Activated naive CD4-positive, alpha-beta T cell treated with anti-CD3 and anti-CD28 coated beads for 36 hours (primary cell): ENCODE measurements at regions of chr4 and their contacts with region 1.

Region 1: DNA sequence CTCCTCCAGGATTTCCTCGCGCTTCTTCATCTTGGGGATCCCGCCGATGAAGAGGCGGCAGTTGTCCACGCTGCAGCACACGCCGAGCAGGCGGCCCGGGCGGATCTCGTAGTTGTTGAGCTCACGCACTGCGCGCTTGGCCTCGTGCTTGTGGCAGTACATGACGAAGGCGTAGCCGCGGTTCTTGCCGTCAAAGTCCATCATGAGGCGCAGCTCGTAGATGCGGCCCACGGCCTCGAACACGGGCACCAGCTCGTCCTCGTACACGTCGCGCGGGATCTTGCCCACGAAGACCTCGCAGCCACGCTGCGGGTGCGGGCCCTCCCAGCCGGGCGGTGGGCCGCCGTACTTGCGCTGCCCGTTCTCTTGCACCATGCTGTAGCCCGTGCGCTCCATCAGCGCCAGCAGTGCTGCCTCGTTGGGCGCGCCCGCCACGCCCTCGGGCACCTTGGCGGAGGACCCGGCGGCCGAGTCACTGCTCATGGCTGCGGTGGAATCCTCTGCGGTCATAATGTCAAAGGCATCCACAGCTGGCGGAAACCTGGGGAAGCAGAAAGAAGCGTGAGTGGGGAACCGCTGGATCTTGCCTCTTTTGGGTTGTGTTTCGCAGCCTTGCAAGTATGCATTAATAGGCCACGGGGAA is 103.4 kb downstream of the CHRNA9 start:
- DNase-seq: no peak
- H3K4me3 Mint-ChIP-seq: no peak overlapping the region
- H3K27ac Mint-ChIP-seq: no peak overlapping the region
- H3K4me1 Mint-ChIP-seq: peaks cover 36% of the 10 kb centered on the region
- H3K27me3 Mint-ChIP-seq: no peaks in the 10 kb centered on the region

Region 2: GRCh38 chr4:40462326-40462725 is 23.8 kb after region 1 on chr4:
- CTCF ChIA-PET with region 1: interaction called, 4 read pairs
- intact Hi-C with region 1: loop called (anchors 1 kb)
- DNase-seq: peak; percentile 67
- H3K4me3 Mint-ChIP-seq: no peak overlapping the region
- H3K27ac Mint-ChIP-seq: peak overlapping the region; percentile 22
- H3K4me1 Mint-ChIP-seq: peaks cover 17% of the 10 kb centered on the region
- H3K27me3 Mint-ChIP-seq: no peaks in the 10 kb centered on the region

Region 3: GRCh38 chr4:40492691-40493090 is 54.2 kb after region 1 on chr4:
- CTCF ChIA-PET with region 1: no interaction called
- intact Hi-C with region 1: no loop called
- DNase-seq: no peak
- H3K4me3 Mint-ChIP-seq: no peak overlapping the region
- H3K27ac Mint-ChIP-seq: no peak overlapping the region
- H3K4me1 Mint-ChIP-seq: no peaks in the 10 kb centered on the region
- H3K27me3 Mint-ChIP-seq: no peaks in the 10 kb centered on the region

Region 4: DNA sequence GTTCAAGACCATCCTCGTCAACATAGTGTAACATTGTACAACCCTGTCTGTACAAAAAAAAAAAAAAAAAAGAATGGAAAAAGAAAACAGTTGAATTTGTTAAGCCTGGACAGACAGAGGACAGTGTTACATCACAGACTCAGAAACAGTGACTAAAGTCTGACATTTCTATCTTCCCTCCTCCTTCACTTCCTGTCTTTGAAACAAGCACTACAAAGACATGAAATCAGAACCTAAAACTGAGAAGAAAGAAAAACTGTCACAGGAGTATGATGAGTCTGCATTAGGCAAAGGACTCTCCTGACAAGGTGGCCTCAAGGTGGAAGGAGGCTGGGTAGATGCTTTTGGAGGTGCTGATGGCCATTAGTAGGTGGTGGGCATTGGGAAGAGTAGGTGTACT is 64.4 kb after region 1 on chr4:
- CTCF ChIA-PET with region 1: interaction called, 4 read pairs
- intact Hi-C with region 1: loop called (anchors 1 kb)
- DNase-seq: peak; percentile 9
- H3K4me3 Mint-ChIP-seq: no peak overlapping the region
- H3K27ac Mint-ChIP-seq: peak overlapping the region; percentile 71
- H3K4me1 Mint-ChIP-seq: peaks cover 21% of the 10 kb centered on the region
- H3K27me3 Mint-ChIP-seq: no peaks in the 10 kb centered on the region

Region 5: DNA sequence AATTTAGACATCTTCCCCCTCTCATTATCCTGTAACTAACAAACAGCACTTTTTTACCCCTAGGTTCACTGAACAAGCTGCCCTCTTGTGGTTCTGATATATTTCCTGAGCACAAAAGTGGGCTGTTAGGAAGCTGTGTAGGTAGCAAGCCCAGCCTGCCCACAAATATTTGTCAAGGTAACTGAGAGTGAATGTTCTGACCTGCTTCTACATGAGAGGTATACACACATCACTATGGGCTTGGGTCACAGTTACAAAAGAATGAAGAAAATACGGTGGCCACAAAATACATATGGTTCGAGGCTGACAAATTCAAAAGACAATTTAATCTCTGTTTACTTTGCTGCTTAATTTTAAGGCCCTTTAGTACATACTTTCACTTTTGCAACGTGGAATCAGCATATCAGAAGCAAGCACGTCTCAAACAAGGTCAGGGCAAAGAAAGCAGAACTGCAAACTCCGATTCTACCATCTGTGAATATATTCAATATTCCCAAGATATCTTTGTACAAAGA is 112.5 kb after region 1 on chr4:
- CTCF ChIA-PET with region 1: no interaction called
- intact Hi-C with region 1: loop called (anchors 1 kb)
- DNase-seq: peak; percentile 34
- H3K4me3 Mint-ChIP-seq: peak overlapping the region; percentile 60
- H3K27ac Mint-ChIP-seq: peak overlapping the region; percentile 55
- H3K4me1 Mint-ChIP-seq: peaks cover 28% of the 10 kb centered on the region
- H3K27me3 Mint-ChIP-seq: no peaks in the 10 kb centered on the region

Region 6: GRCh38 chr4:40564004-40564403 is 125.5 kb after region 1 on chr4:
- CTCF ChIA-PET with region 1: no interaction called
- intact Hi-C with region 1: no loop called
- DNase-seq: no peak
- H3K4me3 Mint-ChIP-seq: no peak overlapping the region
- H3K27ac Mint-ChIP-seq: no peak overlapping the region
- H3K4me1 Mint-ChIP-seq: no peaks in the 10 kb centered on the region
- H3K27me3 Mint-ChIP-seq: no peaks in the 10 kb centered on the region